WTC11 (cell line): ENCODE measurements at regions of chr6 and their contacts with region 1.

Region 1: GRCh38 chr6:111259089-111259831 is 172.0 kb downstream of the SLC16A10 start:
- DNase-seq: peak; percentile 97
- ATAC-seq: peak; percentile 96
- H3K4me3 Mint-ChIP-seq: peak overlapping the region; percentile 74
- H3K27ac Mint-ChIP-seq: peak overlapping the region; percentile 33
- H3K4me1 Mint-ChIP-seq: peaks cover 41% of the 10 kb centered on the region
- H3K27me3 Mint-ChIP-seq: peaks cover 12% of the 10 kb centered on the region
- CTCF ChIP-seq: peak; percentile 77

Region 2: GRCh38 chr6:111011360-111012142 is 247.7 kb before region 1 on chr6:
- CTCF ChIA-PET with region 1: interaction called, 14 read pairs
- POLR2A ChIA-PET with region 1: no interaction called
- DNase-seq: no peak
- ATAC-seq: peak; percentile 73
- H3K4me3 Mint-ChIP-seq: no peak overlapping the region
- H3K27ac Mint-ChIP-seq: no peak overlapping the region
- H3K4me1 Mint-ChIP-seq: no peaks in the 10 kb centered on the region
- H3K27me3 Mint-ChIP-seq: no peaks in the 10 kb centered on the region
- CTCF ChIP-seq: no peak

Region 3: GRCh38 chr6:111210194-111210728 is 49.0 kb before region 1 on chr6:
- CTCF ChIA-PET with region 1: interaction called, 15 read pairs
- POLR2A ChIA-PET with region 1: no interaction called
- DNase-seq: no peak
- ATAC-seq: peak; percentile 89
- H3K4me3 Mint-ChIP-seq: no peak overlapping the region
- H3K27ac Mint-ChIP-seq: peak overlapping the region; percentile 85
- H3K4me1 Mint-ChIP-seq: peaks cover 8% of the 10 kb centered on the region
- H3K27me3 Mint-ChIP-seq: no peaks in the 10 kb centered on the region
- CTCF ChIP-seq: peak; percentile 49

Region 4: GRCh38 chr6:111242452-111242851 is 16.8 kb before region 1 on chr6:
- CTCF ChIA-PET with region 1: interaction called, 10 read pairs
- POLR2A ChIA-PET with region 1: interaction called, 4 read pairs
- DNase-seq: no peak
- ATAC-seq: no peak
- H3K4me3 Mint-ChIP-seq: no peak overlapping the region
- H3K27ac Mint-ChIP-seq: no peak overlapping the region
- H3K4me1 Mint-ChIP-seq: no peaks in the 10 kb centered on the region
- H3K27me3 Mint-ChIP-seq: no peaks in the 10 kb centered on the region
- CTCF ChIP-seq: no peak

Region 5: GRCh38 chr6:111430605-111431378 is 171.5 kb after region 1 on chr6:
- CTCF ChIA-PET with region 1: no interaction called
- POLR2A ChIA-PET with region 1: no interaction called
- DNase-seq: no peak
- ATAC-seq: no peak
- H3K4me3 Mint-ChIP-seq: no peak overlapping the region
- H3K27ac Mint-ChIP-seq: no peak overlapping the region
- H3K4me1 Mint-ChIP-seq: peaks cover 6% of the 10 kb centered on the region
- H3K27me3 Mint-ChIP-seq: no peaks in the 10 kb centered on the region
- CTCF ChIP-seq: no peak

Region 6: GRCh38 chr6:111478749-111479148 is 219.5 kb after region 1 on chr6:
- CTCF ChIA-PET with region 1: interaction called, 39 read pairs
- POLR2A ChIA-PET with region 1: interaction called, 4 read pairs
- DNase-seq: no peak
- ATAC-seq: peak; percentile 53
- H3K4me3 Mint-ChIP-seq: no peak overlapping the region
- H3K27ac Mint-ChIP-seq: no peak overlapping the region
- H3K4me1 Mint-ChIP-seq: peaks cover 37% of the 10 kb centered on the region
- H3K27me3 Mint-ChIP-seq: peaks cover 83% of the 10 kb centered on the region
- CTCF ChIP-seq: no peak

Region 7: GRCh38 chr6:111565326-111566221 is 306.3 kb after region 1 on chr6:
- CTCF ChIA-PET with region 1: interaction called, 10 read pairs
- POLR2A ChIA-PET with region 1: no interaction called
- DNase-seq: peak; percentile 51
- ATAC-seq: peak; percentile 91
- H3K4me3 Mint-ChIP-seq: no peak overlapping the region
- H3K27ac Mint-ChIP-seq: peak overlapping the region; percentile 85
- H3K4me1 Mint-ChIP-seq: peaks cover 9% of the 10 kb centered on the region
- H3K27me3 Mint-ChIP-seq: no peaks in the 10 kb centered on the region
- CTCF ChIP-seq: peak; percentile 41; the same call in 1 of the 2 replicates

Region 8: DNA sequence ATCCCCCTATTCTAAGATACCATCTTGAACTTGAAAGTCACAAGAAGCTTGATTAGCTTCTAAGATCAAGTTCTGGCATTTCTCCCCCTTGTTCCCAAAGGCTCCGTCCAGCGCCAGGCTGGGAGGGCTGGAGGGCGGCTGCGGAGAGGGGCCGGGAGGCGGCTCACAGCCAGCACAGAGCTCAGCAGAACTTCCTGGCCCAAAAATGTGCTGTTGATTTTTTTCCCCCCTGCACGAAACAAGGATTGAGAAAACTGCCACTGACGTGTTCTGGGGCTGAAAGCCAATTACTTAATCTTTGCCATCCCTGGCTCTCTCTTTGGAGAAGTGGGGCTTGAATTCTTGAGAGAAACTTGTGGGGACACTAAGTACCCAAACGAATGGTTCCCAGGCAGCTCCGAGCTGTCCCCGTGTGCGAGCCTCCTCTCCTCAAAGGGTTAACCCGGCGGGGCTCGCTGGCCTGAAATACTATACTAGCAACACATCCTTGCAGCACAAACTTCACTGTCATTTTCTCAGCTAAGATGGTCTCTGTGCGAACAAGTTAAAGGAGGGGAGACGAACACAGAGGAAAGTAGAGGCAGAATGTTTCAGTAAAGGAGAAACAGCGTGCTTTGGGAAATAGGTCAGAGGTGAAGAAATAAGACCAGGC is 346.0 kb after region 1 on chr6:
- CTCF ChIA-PET with region 1: interaction called, 13 read pairs
- POLR2A ChIA-PET with region 1: no interaction called
- DNase-seq: peak; percentile 64
- ATAC-seq: peak; percentile 56
- H3K4me3 Mint-ChIP-seq: peak overlapping the region; percentile 84
- H3K27ac Mint-ChIP-seq: peak overlapping the region; percentile 97
- H3K4me1 Mint-ChIP-seq: peaks cover 42% of the 10 kb centered on the region
- H3K27me3 Mint-ChIP-seq: no peaks in the 10 kb centered on the region
- CTCF ChIP-seq: no peak